Right ventricle myocardium inferior (tissue), 1 donor: ENCODE measurements at regions of chr1 and their contacts with region 1.

Region 1: GRCh38 chr1:119885903-119886783 is 10.2 kb downstream of the ADAM30 start:
- DNase-seq: peak; percentile 77
- ATAC-seq: peak; percentile 60

Region 2: DNA sequence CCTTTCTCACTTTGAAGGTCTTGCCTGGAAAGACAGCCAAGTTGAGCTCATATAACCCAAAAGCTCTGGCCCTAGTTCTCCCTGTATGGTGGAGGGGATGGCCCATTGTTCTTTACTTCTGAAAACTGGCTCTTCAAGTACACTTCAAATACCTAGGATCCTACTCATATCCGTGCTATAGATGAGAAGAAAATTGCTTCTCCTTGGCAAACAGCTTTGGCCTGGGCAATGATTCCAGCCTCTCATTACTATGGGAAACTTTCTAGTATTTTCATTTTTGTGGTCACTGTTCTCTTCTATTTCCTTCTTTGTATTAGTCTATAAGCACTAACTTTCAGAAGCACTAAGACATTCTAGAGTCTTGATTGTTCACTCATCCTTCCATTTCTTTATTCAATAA is 291.8 kb before region 1 on chr1:
- intact Hi-C with region 1: no loop called
- DNase-seq: no peak
- ATAC-seq: no peak

Region 3: DNA sequence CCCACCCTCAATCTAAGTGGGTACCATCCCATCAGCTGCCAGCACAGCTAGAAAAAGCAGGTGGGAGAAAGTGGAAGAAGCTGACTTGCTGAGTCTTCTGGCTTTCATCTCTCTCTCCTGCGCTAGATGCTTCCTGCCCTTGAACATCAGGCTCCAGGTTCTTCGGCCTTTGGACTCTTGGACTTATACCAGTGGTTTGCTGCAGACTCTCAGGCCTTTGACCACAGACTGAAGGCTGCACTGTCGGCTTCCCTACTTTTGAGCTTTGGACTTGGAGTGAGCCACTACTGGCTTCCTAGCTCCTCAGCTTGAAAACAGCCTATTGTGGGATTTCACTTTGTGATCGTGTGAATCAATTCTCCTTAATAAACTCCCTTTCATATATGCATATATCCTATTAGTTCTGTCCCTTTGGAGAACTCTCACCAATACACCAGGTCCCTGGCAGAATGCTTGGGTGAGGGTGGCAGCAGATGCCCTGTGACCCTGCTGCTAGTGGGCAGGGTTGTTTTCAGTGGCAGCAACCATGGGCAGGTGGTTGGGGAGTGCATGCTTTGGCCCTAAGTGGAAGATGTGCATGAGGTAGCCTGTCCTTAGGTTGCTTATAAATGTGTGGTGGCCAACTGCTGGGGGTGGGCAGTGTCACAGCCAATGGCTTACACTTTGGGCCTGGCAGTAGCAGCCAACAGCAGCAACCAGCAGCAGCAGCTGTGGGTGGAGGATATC is 20.9 kb after region 1 on chr1:
- intact Hi-C with region 1: no loop called
- DNase-seq: no peak
- ATAC-seq: no peak

Region 4: DNA sequence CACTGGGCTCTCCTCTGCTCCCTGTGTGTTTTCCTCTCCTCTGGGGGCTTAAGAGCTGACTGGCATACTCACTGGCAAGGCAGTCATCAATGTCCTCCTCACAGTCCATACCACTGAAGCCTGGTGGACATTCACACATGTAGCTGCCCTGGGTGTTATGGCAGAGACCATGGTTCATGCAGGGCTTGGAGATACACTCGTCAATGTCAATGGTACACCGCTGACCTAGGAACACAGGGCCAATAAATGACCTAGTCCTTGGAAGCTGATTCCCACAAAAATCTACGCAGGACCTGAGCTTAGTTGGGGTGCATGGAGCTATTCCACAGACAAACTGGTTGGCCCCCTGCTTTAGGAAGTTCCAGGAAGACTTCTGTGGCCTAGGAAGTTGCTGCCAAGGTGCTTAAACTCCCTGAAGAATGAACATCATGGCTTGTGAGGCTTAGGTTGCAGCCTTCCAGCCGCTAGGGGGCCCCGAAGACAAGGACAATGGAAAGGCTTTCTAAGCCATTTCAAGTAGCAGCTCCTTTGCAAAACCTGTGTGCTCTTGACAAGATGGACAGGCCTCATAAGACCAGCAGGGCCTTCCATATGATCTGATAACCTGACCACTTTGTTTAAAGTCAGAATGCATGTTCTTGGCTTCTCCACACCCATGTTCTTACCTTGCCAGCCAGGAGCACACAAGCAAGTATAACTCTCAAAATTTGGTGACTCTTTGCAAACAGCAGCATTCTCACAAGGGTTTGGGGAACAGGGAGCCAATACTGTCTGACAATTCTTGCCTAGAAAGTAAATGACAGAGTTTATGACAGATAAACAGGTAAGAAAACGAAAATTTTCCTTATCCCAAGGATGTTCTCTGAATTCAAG is 62.4 kb after region 1 on chr1:
- intact Hi-C with region 1: loop called (anchors 10 kb)
- DNase-seq: peak; percentile 86
- ATAC-seq: peak; percentile 88